ENCODE measurements at regions of chr16 and their contacts with region 1.

Region 1: GRCh38 chr16:56970934-56971767 is 9.4 kb downstream of the CETP start:
- DNase-seq: peak; percentile 80
- ATAC-seq: peak; percentile 85
- H3K4me3 ChIP-seq: no peak overlapping the region
- H3K27ac ChIP-seq: peak overlapping the region; percentile 27; the same call in 1 of the 2 replicates
- H3K4me1 ChIP-seq: peaks cover 46% of the 10 kb centered on the region
- H3K27me3 ChIP-seq: no peaks in the 10 kb centered on the region
- CTCF ChIP-seq: peak in 1 of 3 experiments; percentile 20; a peak in 1 of 6 replicates
- EP300 ChIP-seq: peak; percentile 37 to 70; a peak in 2 of 4 replicates
- POLR2A ChIP-seq: 0 out of 2 replicates have a peak, but pooled peaks have one; percentile 21
- RAD21 ChIP-seq: peak; percentile 29; the same call in 1 of the 2 replicates

Region 2: GRCh38 chr16:56988948-56989945 is 18.1 kb after region 1 on chr16 and contains the start of gene NLRC5:
- CTCF ChIA-PET with region 1: interaction called, 420 read pairs
- POLR2A ChIA-PET with region 1: interaction called, 343 read pairs
- RAD21 ChIA-PET with region 1: interaction called, 473 read pairs
- SMC1A ChIA-PET with region 1: interaction called, 381 read pairs
- in situ Hi-C with region 1: no loop called
- intact Hi-C with region 1: loop called (anchors 1 kb)
- DNase-seq: no peak
- ATAC-seq: peak; percentile 83
- H3K4me3 ChIP-seq: peak within 1 kb of the TSS; percentile 79
- H3K27ac ChIP-seq: peak within 1 kb of the TSS; percentile 88
- H3K4me1 ChIP-seq: peaks cover 32% of the 10 kb centered on the region
- H3K27me3 ChIP-seq: no peaks in the 10 kb centered on the region
- CTCF ChIP-seq: no peak
- EP300 ChIP-seq: no peak
- POLR2A ChIP-seq: peak; percentile 87
- RAD21 ChIP-seq: no peak
- polyA plus RNA-seq, gene NLRC5: 13.1 to 14.2 TPM

Region 3: GRCh38 chr16:56994311-56994710 is 23.2 kb after region 1 on chr16:
- CTCF ChIA-PET with region 1: interaction called, 420 read pairs
- POLR2A ChIA-PET with region 1: interaction called, 343 read pairs
- RAD21 ChIA-PET with region 1: interaction called, 473 read pairs
- SMC1A ChIA-PET with region 1: interaction called, 604 read pairs
- in situ Hi-C with region 1: no loop called
- intact Hi-C with region 1: loop called (anchors 1 kb)
- DNase-seq: no peak
- ATAC-seq: 0 out of 3 replicates have a peak, but pooled peaks have one; percentile 1
- H3K4me3 ChIP-seq: no peak overlapping the region; the same call in 1 of the 2 replicates
- H3K27ac ChIP-seq: peak overlapping the region; percentile 15
- H3K4me1 ChIP-seq: peaks cover 14% of the 10 kb centered on the region
- H3K27me3 ChIP-seq: no peaks in the 10 kb centered on the region
- CTCF ChIP-seq: no peak
- EP300 ChIP-seq: no peak
- POLR2A ChIP-seq: no peak
- RAD21 ChIP-seq: no peak

Region 4: GRCh38 chr16:57000271-57001025 is 29.3 kb after region 1 on chr16:
- CTCF ChIA-PET with region 1: interaction called, 55 read pairs
- POLR2A ChIA-PET with region 1: interaction called, 216 read pairs
- RAD21 ChIA-PET with region 1: interaction called, 473 read pairs
- SMC1A ChIA-PET with region 1: interaction called, 604 read pairs
- in situ Hi-C with region 1: no loop called
- intact Hi-C with region 1: no loop called
- DNase-seq: peak; percentile 87
- ATAC-seq: peak; percentile 80
- H3K4me3 ChIP-seq: peak overlapping the region; percentile 20; the same call in 1 of the 2 replicates
- H3K27ac ChIP-seq: peak overlapping the region; percentile 93
- H3K4me1 ChIP-seq: peaks cover 52% of the 10 kb centered on the region
- H3K27me3 ChIP-seq: no peaks in the 10 kb centered on the region
- CTCF ChIP-seq: no peak
- EP300 ChIP-seq: no peak
- POLR2A ChIP-seq: no peak; the same call in 1 of the 2 replicates
- RAD21 ChIP-seq: no peak

Region 5: DNA sequence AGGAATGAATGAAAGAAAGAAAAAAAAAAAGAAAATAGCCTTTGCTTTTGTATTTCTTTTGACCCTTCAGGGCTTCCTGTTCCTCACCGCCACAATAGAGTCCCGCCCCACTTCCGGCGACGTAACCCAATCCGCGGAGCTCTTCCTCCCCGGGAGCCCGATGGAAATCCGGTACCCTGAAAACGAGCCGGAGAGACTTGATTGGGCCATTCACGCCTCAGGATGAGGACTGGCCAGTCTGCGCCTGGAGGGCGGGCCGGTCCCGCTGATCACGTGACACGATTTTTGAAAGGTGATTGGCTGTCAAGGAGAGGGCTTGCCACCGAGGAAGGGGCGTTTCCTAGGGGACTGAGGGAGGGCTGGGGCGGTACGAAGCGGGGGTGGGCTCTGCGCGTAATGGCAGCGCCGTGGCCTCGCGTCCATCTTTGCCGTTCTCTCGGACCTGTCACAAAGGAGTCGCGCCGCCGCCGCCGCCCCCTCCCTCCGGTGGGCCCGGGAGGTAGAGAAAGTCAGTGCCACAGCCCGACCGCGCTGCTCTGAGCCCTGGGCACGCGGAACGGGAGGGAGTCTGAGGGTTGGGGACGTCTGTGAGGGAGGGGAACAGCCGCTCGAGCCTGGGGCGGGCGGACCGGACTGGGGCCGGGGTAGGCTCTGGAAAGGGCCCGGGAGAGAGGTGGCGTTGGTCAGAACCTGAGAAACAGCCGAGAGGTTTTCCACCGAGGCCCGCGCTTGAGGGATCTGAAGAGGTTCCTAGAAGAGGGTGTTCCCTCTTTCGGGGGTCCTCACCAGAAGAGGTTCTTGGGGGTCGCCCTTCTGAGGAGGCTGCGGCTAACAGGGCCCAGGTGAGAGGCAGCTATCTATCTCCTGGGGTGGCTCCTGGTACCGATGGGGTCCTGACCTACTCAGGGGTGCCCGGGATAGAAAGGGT is 215.1 kb after region 1 on chr16 and contains the starts of genes PSME3IP1 and RSPRY1:
- CTCF ChIA-PET with region 1: no interaction called
- POLR2A ChIA-PET with region 1: no interaction called
- RAD21 ChIA-PET with region 1: interaction called, 3 read pairs
- SMC1A ChIA-PET with region 1: no interaction called
- in situ Hi-C with region 1: no loop called
- intact Hi-C with region 1: loop called (anchors 5 kb)
- DNase-seq: peak; percentile 99
- ATAC-seq: peak; percentile 92
- H3K4me3 ChIP-seq: peak within 1 kb of the TSS; percentile 84
- H3K27ac ChIP-seq: peak within 1 kb of the TSS; percentile 94
- H3K4me1 ChIP-seq: peaks cover 5% of the 10 kb centered on the region; the same call in 1 of the 2 replicates
- H3K27me3 ChIP-seq: no peaks in the 10 kb centered on the region
- CTCF ChIP-seq: no peak
- EP300 ChIP-seq: no peak
- POLR2A ChIP-seq: peak; percentile 91
- RAD21 ChIP-seq: no peak
- polyA plus RNA-seq, gene PSME3IP1: 72.5 to 90.2 TPM
- polyA plus RNA-seq, gene RSPRY1: 18.5 to 25.1 TPM

Region 6: DNA sequence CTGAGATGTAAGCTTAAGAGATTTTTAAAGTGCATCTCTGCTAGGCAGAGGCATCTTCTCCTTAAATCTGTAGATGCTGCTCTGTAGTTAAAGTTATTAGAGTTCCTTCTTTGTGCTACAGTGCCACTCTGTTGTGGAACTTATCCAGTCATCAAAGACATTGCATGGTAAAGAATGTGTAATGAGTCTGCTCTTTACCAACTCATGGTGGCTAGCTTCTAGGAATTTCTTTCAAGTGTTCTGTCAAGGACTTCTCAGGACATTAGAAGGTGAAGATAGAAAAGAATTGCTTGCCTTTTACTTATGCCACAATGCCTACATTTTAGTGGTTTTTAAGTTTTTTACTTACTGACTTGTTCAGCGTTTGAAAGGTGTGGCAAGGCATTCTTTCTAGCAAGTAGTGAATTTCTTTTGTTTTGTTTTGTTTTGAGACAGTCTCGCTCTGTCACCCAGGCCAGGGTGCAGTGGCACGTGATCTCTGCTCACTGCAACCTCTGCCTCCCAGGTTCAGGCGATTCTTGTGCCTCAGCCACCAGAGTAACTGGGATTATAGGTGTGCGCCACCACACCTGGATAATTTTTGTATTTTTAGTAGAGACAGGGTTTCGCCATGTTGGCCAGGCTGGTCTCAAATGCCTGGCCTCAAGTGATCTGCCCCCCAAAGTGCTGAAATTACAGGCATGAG is 253.6 kb after region 1 on chr16:
- CTCF ChIA-PET with region 1: no interaction called
- POLR2A ChIA-PET with region 1: no interaction called
- RAD21 ChIA-PET with region 1: no interaction called
- SMC1A ChIA-PET with region 1: no interaction called
- in situ Hi-C with region 1: no loop called
- intact Hi-C with region 1: no loop called
- DNase-seq: no peak
- ATAC-seq: no peak
- H3K4me3 ChIP-seq: no peak overlapping the region
- H3K27ac ChIP-seq: no peak overlapping the region
- H3K4me1 ChIP-seq: no peaks in the 10 kb centered on the region
- H3K27me3 ChIP-seq: no peaks in the 10 kb centered on the region
- CTCF ChIP-seq: no peak
- EP300 ChIP-seq: no peak
- POLR2A ChIP-seq: no peak
- RAD21 ChIP-seq: no peak

Measured in GM12878 (cell line).